Body of pancreas (tissue), 4 donors: ENCODE measurements at regions of chr5 and their contacts with region 1.

Region 1: DNA sequence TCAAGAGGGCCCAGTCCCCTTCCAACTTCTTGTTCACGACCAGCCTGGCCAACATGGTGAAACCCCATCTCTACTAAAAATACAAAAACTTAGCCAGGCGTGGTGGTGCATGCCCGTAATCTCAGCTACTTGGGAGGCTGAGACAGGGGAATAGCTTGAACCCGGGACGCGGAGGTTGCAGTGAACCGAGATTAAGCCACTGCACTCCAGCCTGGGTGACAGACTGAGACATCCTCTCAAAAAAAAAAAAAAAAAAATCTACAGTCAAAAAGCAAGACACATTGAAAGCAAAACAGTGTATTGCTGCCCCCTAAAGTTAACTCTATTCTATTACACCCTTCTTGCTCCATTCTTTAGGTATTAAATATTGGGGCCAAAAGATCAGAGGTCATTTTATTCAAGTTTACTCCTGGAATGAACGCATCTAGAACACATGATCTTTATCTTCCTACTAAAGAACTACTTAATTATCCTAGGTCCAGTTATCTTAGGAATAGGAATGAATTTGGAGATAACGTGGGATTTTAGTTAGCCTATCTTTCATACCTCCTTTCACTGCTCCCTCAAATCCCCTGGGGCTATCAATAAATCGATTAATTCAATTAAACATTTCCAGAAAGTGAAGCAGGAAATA is 2.4 kb downstream of the ATG12 start:
- DNase-seq: no peak
- ATAC-seq: no peak
- H3K4me3 ChIP-seq: no peak overlapping the region
- H3K27ac ChIP-seq: peak overlapping the region in 1 of 4 donors; percentile 11
- H3K4me1 ChIP-seq: peaks cover 39% of the 10 kb centered on the region
- H3K27me3 ChIP-seq: no peaks in the 10 kb centered on the region
- CTCF ChIP-seq: peak; percentile 37 to 82 (median 63)
- POLR2A ChIP-seq: no peak

Region 2: DNA sequence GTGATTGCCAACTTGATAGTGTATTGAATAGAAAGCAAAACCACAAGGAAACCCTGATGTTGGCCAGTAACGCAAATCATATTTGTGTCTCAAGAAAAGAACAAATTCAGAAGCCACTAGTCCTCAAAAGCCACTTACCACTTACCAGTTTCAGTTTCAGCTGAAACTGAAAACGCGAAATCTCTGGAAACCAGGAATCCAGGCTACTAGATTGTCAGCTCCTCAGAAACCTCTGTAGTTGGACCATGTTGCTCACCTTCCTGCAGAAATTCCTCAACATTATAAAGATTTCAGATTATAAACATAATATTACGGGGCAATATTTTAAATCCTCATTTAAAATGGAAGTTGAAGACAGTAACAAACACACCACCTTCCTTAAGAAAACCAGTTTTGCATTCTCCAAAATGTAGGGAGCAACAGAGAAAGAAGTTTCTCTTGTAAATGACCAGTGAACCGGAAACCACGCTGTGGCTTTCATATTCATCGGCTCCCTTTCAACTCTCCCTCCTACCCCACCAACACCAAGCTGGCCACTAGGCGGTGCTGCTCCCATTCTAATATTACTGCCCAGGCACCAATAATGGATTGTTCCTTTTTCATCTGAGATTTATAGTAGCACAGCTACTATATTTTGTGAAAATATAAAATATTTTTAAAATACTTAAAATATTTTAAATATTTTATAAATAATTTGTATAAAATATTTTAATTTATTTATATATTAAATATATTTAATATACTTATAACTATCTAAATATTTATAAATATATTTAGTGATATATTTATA is 204.5 kb before region 1 on chr5:
- intact Hi-C with region 1: loop called (anchors 5 kb)
- DNase-seq: peak; percentile 87 to 94 (median 91)
- ATAC-seq: peak; percentile 99
- H3K4me3 ChIP-seq: peak overlapping the region in 1 of 2 donors; percentile 4
- H3K27ac ChIP-seq: peak overlapping the region in 3 of 4 donors; percentile 67 to 87 (median 77)
- H3K4me1 ChIP-seq: peaks cover 17% of the 10 kb centered on the region
- H3K27me3 ChIP-seq: no peaks in the 10 kb centered on the region
- CTCF ChIP-seq: peak; percentile 62 to 97 (median 96)
- POLR2A ChIP-seq: peak in 2 of 3 donors; percentile 30 to 43